HCT116 (cell line): ENCODE measurements at regions of chr5 and their contacts with region 1.

Region 1: DNA sequence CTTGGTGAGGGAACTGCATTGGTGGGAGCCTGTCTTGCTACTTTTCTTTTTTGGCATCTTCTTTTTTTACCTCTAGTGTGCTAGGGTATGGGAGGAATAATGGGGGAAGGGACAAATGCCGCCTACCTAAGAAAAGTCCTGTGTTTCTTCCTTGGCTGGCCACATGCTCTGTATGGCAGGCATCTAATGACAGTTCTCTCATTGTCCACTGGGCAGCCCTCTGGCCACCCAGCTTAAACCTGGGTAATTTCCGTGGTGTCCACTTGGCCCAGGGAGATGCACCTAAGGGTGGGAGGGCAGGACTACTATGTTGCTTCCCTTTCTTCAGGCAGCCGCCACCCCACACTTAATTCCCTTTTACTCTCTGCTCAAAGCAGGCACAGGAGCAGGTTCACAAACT is 173.1 kb downstream of the YTHDC2 start:
- DNase-seq: no peak
- ATAC-seq: peak; percentile 62
- H3K4me3 ChIP-seq: no peak overlapping the region
- H3K27ac ChIP-seq: no peak overlapping the region
- H3K4me1 ChIP-seq: no peaks in the 10 kb centered on the region
- H3K27me3 ChIP-seq: peaks cover 38% of the 10 kb centered on the region; the same call in 1 of the 2 replicates
- CTCF ChIP-seq: peak in 1 of 3 experiments; percentile 18; a peak in 1 of 6 replicates
- POLR2A ChIP-seq: no peak
- RAD21 ChIP-seq: no peak

Region 2: DNA sequence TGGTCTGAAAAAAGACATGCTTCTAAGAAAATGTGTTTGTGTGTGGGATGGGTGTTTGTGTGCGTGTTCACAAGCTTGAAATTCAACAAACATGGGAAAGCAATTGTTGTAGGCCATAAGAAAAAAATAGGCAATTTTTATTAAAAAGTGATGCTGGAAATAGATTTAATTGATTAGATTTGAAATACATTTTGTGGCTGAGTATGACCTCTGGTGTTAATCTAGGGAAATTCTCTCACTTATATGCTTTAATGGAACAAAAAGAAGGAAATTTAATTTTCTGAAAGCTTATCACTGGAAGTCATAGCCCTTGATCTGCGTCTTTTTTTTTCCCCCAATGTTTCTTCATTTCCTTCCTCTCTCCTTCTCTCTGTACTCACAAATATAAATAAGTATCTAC is 671.7 kb after region 1 on chr5:
- CTCF ChIA-PET with region 1: no interaction called
- POLR2A ChIA-PET with region 1: no interaction called
- RAD21 ChIA-PET with region 1: no interaction called
- intact Hi-C with region 1: loop called (anchors 5 kb)
- DNase-seq: no peak
- ATAC-seq: no peak
- H3K4me3 ChIP-seq: no peak overlapping the region
- H3K27ac ChIP-seq: no peak overlapping the region
- H3K4me1 ChIP-seq: no peaks in the 10 kb centered on the region
- H3K27me3 ChIP-seq: peaks cover 16% of the 10 kb centered on the region
- CTCF ChIP-seq: no peak
- POLR2A ChIP-seq: no peak
- RAD21 ChIP-seq: peak; percentile 33; the same call in 1 of the 2 replicates